Spleen (tissue), 13 donors: ENCODE measurements at regions of chr5 and their contacts with region 1.

Region 1: GRCh38 chr5:157312492-157312891 is 46.6 kb downstream of the CYFIP2 start:
- DNase-seq: no peak
- H3K4me3 ChIP-seq: no peak overlapping the region
- H3K27ac ChIP-seq: peak overlapping the region in 3 of 8 donors; percentile 1 to 25 (median 16)
- H3K4me1 ChIP-seq: peaks cover 0 to 15% (median 0%) of the 10 kb centered on the region in 6 donors
- H3K27me3 ChIP-seq: no peaks in the 10 kb centered on the region
- CTCF ChIP-seq: peak; percentile 50 to 76 (median 63)
- POLR2A ChIP-seq: no peak

Region 2: GRCh38 chr5:157150995-157151394 is 161.5 kb before region 1 on chr5:
- intact Hi-C with region 1: loop called (anchors 5 kb)
- DNase-seq: no peak
- H3K4me3 ChIP-seq: no peak overlapping the region
- H3K27ac ChIP-seq: no peak overlapping the region
- H3K4me1 ChIP-seq: peaks cover 0 to 10% (median 6%) of the 10 kb centered on the region in 6 donors
- H3K27me3 ChIP-seq: no peaks in the 10 kb centered on the region
- CTCF ChIP-seq: no peak
- POLR2A ChIP-seq: no peak

Region 3: DNA sequence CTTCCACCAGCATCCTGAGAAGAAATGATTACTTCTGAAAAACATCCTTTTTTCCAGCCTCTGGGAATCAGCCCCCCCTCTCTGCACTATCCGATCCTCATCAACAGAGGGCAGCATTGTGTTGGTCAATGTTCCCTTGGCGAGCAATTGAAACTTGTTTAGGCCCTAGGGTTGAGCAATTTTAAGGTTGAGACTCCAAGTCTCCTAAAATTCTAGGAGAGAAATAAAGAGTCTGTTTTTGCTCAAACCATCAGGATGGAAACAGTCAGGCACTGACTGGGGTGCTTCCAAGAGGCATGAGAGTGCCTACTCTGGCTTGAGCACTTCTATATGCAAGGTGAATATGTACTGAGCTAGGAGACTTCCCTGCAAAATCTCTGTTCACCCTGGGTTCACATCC is 58.9 kb before region 1 on chr5:
- intact Hi-C with region 1: loop called (anchors 10 kb)
- DNase-seq: no peak
- H3K4me3 ChIP-seq: peak overlapping the region in 1 of 8 donors; percentile 39
- H3K27ac ChIP-seq: peak overlapping the region in 7 of 8 donors; percentile 7 to 78 (median 64)
- H3K4me1 ChIP-seq: peaks cover 7 to 75% (median 38%) of the 10 kb centered on the region in 6 donors
- H3K27me3 ChIP-seq: no peaks in the 10 kb centered on the region
- CTCF ChIP-seq: peak; percentile 69 to 89 (median 81)
- POLR2A ChIP-seq: no peak

Region 4: GRCh38 chr5:157431544-157432200 is 119.2 kb after region 1 on chr5:
- intact Hi-C with region 1: no loop called
- DNase-seq: no peak
- H3K4me3 ChIP-seq: no peak overlapping the region
- H3K27ac ChIP-seq: peak overlapping the region in 1 of 8 donors; percentile 26
- H3K4me1 ChIP-seq: peaks cover 0 to 10% (median 5%) of the 10 kb centered on the region in 6 donors
- H3K27me3 ChIP-seq: no peaks in the 10 kb centered on the region
- CTCF ChIP-seq: peak in 10 of 11 experiments; percentile 21 to 75 (median 51)
- POLR2A ChIP-seq: no peak

Region 5: GRCh38 chr5:157886796-157887380 is 574.4 kb after region 1 on chr5:
- intact Hi-C with region 1: no loop called
- DNase-seq: no peak
- H3K4me3 ChIP-seq: no peak overlapping the region
- H3K27ac ChIP-seq: no peak overlapping the region
- H3K4me1 ChIP-seq: peaks cover 0 to 12% (median 0%) of the 10 kb centered on the region in 6 donors
- H3K27me3 ChIP-seq: no peaks in the 10 kb centered on the region
- CTCF ChIP-seq: no peak
- POLR2A ChIP-seq: no peak